ENCODE measurements at regions of chr13 and their contacts with region 1.

Region 1: GRCh38 chr13:19567820-19568534 is 6.6 kb upstream of the TPTE2 start:
- DNase-seq: no peak
- ATAC-seq: no peak
- H3K4me3 Mint-ChIP-seq: peak overlapping the region; percentile 4
- H3K27ac Mint-ChIP-seq: no peak overlapping the region
- H3K4me1 Mint-ChIP-seq: peaks cover 16% of the 10 kb centered on the region
- H3K27me3 Mint-ChIP-seq: peaks cover 2% of the 10 kb centered on the region
- CTCF ChIP-seq: no peak

Region 2: DNA sequence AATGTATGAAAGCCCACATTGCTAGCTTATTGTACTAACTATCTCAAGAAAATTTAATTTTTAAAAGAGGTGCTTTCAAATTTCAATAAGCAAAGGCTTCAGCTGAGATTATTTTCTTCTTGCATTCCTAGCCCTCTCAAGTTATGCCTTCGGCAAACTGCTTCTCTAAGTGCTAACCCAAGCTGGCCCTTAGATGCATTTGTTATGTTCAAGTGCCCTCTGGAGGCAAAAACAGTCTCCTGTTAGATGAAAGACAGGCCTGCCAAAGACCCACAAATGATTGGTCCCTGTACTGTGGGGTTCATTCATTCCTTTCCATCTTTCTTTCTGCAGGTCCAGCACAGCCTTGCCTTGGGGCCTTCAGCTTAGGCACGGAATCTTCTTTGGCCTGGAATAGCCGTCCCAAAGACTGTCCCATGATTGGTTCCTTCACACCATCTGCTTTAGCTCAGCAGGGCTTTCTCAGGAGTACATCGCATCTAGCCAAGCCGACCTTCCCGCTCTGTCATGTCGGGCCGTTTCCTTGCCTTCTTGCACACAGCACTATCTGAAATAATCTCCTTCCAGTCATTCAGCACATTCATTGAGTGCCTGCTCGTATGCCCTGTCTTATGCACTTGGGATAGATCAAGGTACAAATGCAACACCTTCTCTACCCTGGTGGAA is 19.8 kb after region 1 on chr13:
- CTCF ChIA-PET with region 1: no interaction called
- POLR2A ChIA-PET with region 1: no interaction called
- intact Hi-C with region 1: loop called (anchors 1 kb)
- DNase-seq: no peak
- ATAC-seq: peak; percentile 38
- H3K4me3 Mint-ChIP-seq: peak overlapping the region; percentile 79
- H3K27ac Mint-ChIP-seq: peak overlapping the region; percentile 82
- H3K4me1 Mint-ChIP-seq: peaks cover 20% of the 10 kb centered on the region
- H3K27me3 Mint-ChIP-seq: peaks cover 12% of the 10 kb centered on the region
- CTCF ChIP-seq: no peak